Naive thymus-derived CD4-positive, alpha-beta T cell (primary cell): ENCODE measurements at regions of chr20 and their contacts with region 1.

Region 1: GRCh38 chr20:37095599-37096414 is at the start of gene RBL1:
- DNase-seq: peak; percentile 72 to 93 (median 91)
- ATAC-seq: peak; percentile 91
- H3K4me3 ChIP-seq: peak within 1 kb of the TSS; percentile 93
- H3K4me3 Mint-ChIP-seq: peak within 1 kb of the TSS; percentile 88 to 100 (median 98)
- H3K27ac ChIP-seq: peak within 1 kb of the TSS; percentile 91
- H3K27ac Mint-ChIP-seq: peak within 1 kb of the TSS; percentile 96 to 100 (median 100)
- H3K4me1 ChIP-seq: peaks cover 17 to 18% of the 10 kb centered on the region in 2 donors
- H3K4me1 Mint-ChIP-seq: peaks cover 15 to 42% (median 34%) of the 10 kb centered on the region in 7 donors
- H3K27me3 ChIP-seq: no peaks in the 10 kb centered on the region
- H3K27me3 Mint-ChIP-seq: peaks cover 0 to 6% (median 0%) of the 10 kb centered on the region in 5 donors
- total RNA-seq, gene RBL1: 27.4 to 51.2 (median 30.6) TPM

Region 2: DNA sequence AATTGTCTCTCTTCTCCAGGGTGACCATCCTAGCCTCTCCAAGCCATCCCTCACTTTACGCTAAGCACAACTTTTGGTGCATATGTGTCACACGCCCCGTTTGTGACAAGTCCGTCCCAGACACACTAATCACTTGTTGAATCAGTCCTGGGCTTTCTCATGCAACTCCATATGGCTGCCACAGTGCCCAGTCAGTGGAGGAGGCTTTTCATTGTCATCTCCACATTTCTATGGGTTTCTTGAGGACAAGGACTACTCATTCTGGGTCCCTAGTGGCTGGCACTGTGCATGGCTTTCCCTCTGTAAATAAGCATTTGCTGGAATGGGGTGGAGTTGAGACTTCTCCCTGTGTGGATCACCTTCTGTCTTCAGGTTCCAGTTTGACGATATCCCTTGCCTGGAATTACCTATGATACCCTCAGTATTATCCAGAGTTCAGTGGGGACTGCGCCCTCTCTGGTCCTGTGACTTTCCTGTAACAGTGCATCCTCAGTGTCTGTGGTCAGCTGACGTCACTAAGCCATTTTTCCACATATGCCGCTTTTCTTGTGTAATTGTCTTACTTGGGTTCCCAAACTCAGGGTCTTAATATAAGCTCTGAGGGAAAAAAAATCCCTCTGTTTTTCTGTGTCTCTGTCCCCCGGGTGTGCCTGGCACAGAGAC is 614.3 kb before region 1 on chr20:
- CTCF ChIA-PET with region 1: no interaction called
- POLR2A ChIA-PET with region 1: no interaction called
- intact Hi-C with region 1: no loop called
- DNase-seq: no peak
- ATAC-seq: peak; percentile 22
- H3K4me3 ChIP-seq: no peak overlapping the region
- H3K4me3 Mint-ChIP-seq: peak overlapping the region in 1 of 10 donors; percentile 37
- H3K27ac ChIP-seq: no peak overlapping the region
- H3K27ac Mint-ChIP-seq: peak overlapping the region in 1 of 9 donors; percentile 9
- H3K4me1 ChIP-seq: peaks cover 4% of the 10 kb centered on the region in 2 donors
- H3K4me1 Mint-ChIP-seq: peaks cover 16 to 56% (median 44%) of the 10 kb centered on the region in 7 donors
- H3K27me3 ChIP-seq: no peaks in the 10 kb centered on the region
- H3K27me3 Mint-ChIP-seq: no peaks in the 10 kb centered on the region

Region 3: DNA sequence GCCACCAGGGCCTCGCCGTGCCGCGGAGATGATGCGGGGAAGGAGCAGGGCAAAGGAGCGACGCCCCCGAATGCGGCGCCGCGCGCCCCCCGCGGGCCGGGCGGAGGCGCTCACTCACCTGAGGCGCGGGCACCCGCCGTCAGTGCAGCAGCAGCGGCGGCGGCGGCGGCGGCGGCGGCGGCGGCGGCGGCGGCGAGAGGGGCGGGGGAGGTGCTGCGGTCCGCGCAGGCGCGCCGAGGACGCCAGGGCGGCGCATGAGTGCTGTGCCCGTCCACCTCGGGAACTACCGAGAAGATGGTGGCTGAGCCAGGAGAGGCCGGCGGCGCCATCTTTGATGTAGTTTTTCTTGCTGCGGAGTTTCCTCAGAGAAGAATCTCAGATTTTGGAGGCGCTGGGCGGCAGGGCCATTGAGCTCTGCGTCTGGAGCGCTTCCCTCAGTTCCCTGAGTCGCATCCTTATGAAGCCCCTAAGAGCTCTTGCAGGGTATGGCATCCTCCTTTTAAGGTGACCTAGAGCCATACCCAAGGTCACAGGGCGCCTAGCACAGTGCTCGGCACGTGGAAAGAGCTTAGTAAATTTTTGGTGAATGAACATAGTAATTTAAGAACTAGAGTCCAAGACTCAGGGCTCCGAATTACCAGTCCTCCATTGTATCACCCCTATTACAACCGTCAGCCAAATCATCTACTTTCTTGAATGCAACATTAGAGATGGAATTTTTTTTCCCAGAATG is 349.7 kb before region 1 on chr20 and contains the start of gene NDRG3:
- CTCF ChIA-PET with region 1: no interaction called
- POLR2A ChIA-PET with region 1: no interaction called
- intact Hi-C with region 1: loop called in 1 of 2 experiments (anchors 1 kb)
- DNase-seq: peak; percentile 81 to 93 (median 91)
- ATAC-seq: peak; percentile 100
- H3K4me3 ChIP-seq: peak within 1 kb of the TSS; percentile 93
- H3K4me3 Mint-ChIP-seq: peak within 1 kb of the TSS; percentile 85 to 94 (median 90)
- H3K27ac ChIP-seq: peak within 1 kb of the TSS; percentile 70
- H3K27ac Mint-ChIP-seq: peak within 1 kb of the TSS; percentile 83 to 97 (median 88)
- H3K4me1 ChIP-seq: peaks cover 5 to 7% of the 10 kb centered on the region in 2 donors
- H3K4me1 Mint-ChIP-seq: peaks cover 20 to 41% (median 29%) of the 10 kb centered on the region in 7 donors
- H3K27me3 ChIP-seq: no peaks in the 10 kb centered on the region
- H3K27me3 Mint-ChIP-seq: no peaks in the 10 kb centered on the region
- total RNA-seq, gene NDRG3: 20.8 to 30.6 (median 28.9) TPM

Region 4: DNA sequence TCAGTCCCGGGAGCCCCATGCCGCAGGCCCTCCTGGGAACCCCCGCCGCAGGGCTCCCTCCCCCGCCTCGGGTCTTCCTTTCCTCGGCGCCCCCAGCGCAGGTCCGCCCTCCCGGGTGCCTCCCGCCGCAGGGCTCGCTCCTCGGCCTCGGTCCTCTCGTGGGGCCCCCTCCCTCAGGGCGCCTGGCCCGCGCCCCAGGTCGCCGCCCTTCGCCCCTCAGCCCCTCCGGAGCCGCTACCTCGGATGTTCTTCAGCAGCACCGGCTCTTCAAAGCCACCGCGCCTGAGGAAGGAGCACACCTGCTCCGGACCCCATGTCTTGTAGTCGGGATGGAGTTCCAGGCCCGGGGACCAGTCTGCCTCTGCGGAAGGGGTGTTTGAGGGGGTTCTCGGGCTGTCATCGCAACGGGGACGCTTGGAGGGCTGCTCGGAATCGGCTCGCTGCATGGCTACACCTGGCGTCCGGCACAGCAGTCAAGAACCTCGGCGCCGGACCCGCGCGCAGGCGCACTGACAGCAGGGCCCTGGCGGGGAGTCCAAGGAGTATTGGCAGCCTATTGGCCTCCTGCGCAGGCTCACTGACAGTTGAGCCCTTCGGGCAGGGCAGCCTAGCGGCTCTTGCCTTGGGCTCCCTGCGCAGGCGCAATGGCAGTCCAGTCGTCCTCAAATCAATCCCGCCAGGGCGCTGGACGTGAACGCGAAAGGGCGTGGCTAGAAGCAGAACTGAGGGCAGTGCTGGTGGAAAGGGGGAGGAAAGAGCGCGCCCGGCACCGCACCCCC is 144.4 kb before region 1 on chr20 and contains the start of gene SAMHD1:
- CTCF ChIA-PET with region 1: no interaction called
- POLR2A ChIA-PET with region 1: interaction called, 3 read pairs
- intact Hi-C with region 1: loop called (anchors 1 kb)
- DNase-seq: peak; percentile 72 to 93 (median 81)
- ATAC-seq: peak; percentile 86
- H3K4me3 ChIP-seq: peak within 1 kb of the TSS; percentile 94
- H3K4me3 Mint-ChIP-seq: peak within 1 kb of the TSS; percentile 93 to 99 (median 98)
- H3K27ac ChIP-seq: peak within 1 kb of the TSS; percentile 97
- H3K27ac Mint-ChIP-seq: peak within 1 kb of the TSS; percentile 96 to 99 (median 98)
- H3K4me1 ChIP-seq: peaks cover 40 to 45% of the 10 kb centered on the region in 2 donors
- H3K4me1 Mint-ChIP-seq: peaks cover 28 to 50% (median 37%) of the 10 kb centered on the region in 7 donors
- H3K27me3 ChIP-seq: no peaks in the 10 kb centered on the region
- H3K27me3 Mint-ChIP-seq: no peaks in the 10 kb centered on the region
- total RNA-seq, gene SAMHD1: 271 to 393 (median 338) TPM

Region 5: GRCh38 chr20:37081717-37082289 is 14.0 kb before region 1 on chr20:
- CTCF ChIA-PET with region 1: interaction called, 7 read pairs
- POLR2A ChIA-PET with region 1: interaction called, 10 read pairs
- intact Hi-C with region 1: no loop called
- DNase-seq: peak in 7 of 9 donors; percentile 21 to 64 (median 54)
- ATAC-seq: peak; percentile 61
- H3K4me3 ChIP-seq: no peak overlapping the region
- H3K4me3 Mint-ChIP-seq: peak overlapping the region in 3 of 10 donors; percentile 5 to 42 (median 17)
- H3K27ac ChIP-seq: no peak overlapping the region
- H3K27ac Mint-ChIP-seq: peak overlapping the region; percentile 62 to 89 (median 82)
- H3K4me1 ChIP-seq: peaks cover 12% of the 10 kb centered on the region in 2 donors
- H3K4me1 Mint-ChIP-seq: peaks cover 2 to 37% (median 29%) of the 10 kb centered on the region in 7 donors
- H3K27me3 ChIP-seq: no peaks in the 10 kb centered on the region
- H3K27me3 Mint-ChIP-seq: no peaks in the 10 kb centered on the region

Region 6: GRCh38 chr20:37223053-37223452 is 127.2 kb after region 1 on chr20:
- CTCF ChIA-PET with region 1: no interaction called
- POLR2A ChIA-PET with region 1: no interaction called
- intact Hi-C with region 1: no loop called
- DNase-seq: no peak
- ATAC-seq: peak; percentile 98
- H3K4me3 ChIP-seq: no peak overlapping the region
- H3K4me3 Mint-ChIP-seq: no peak overlapping the region
- H3K27ac ChIP-seq: no peak overlapping the region
- H3K27ac Mint-ChIP-seq: no peak overlapping the region
- H3K4me1 ChIP-seq: no peaks in the 10 kb centered on the region
- H3K4me1 Mint-ChIP-seq: peaks cover 0 to 10% (median 5%) of the 10 kb centered on the region in 7 donors
- H3K27me3 ChIP-seq: no peaks in the 10 kb centered on the region
- H3K27me3 Mint-ChIP-seq: no peaks in the 10 kb centered on the region

Region 7: DNA sequence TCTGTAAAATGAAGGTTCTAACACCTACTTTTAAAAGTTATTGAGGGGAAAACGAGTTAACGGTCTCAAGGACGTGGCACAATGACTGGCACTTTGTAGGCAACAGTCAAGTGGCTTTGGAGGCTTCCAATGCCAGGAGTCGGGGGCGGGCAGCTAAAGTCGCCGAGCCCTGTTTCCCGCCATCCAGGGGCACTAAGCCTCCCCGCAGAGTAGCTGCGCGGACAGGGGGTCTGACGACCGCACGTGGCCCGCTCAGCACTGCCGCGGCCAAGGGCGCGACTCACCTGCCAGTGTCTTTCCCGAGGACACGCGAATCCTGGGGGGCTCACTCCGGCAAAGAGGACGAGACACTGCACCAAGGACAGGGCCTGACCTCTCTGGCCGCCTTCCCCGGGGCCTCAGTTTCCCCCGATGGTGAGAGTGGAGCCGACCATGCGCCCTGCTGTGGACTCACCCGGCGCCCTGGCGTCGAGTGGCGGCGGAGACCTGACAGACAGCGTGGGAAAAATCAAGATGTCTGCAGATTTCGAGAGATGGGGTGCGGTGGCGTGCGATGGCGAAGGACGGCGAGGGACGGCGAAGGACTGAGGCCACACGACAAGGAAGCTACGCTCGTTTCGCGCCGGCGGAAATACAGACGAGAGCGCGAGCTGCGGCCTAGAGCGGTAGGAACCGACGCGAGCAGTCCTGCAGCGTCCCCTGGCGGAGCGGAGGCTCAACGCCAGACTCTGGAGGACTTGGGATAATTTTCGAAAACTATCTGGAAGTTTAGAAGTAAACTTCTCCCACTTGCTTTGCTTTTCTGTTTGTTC is 1339.1 kb after region 1 on chr20 and contains the start of gene SNHG17:
- CTCF ChIA-PET with region 1: no interaction called
- POLR2A ChIA-PET with region 1: no interaction called
- intact Hi-C with region 1: loop called in 1 of 2 experiments (anchors 5 kb)
- DNase-seq: peak; percentile 80 to 89 (median 87)
- ATAC-seq: peak; percentile 99
- H3K4me3 ChIP-seq: peak within 1 kb of the TSS; percentile 62
- H3K4me3 Mint-ChIP-seq: peak within 1 kb of the TSS; percentile 87 to 99 (median 94)
- H3K27ac ChIP-seq: peak within 1 kb of the TSS; percentile 81
- H3K27ac Mint-ChIP-seq: peak within 1 kb of the TSS; percentile 91 to 98 (median 95)
- H3K4me1 ChIP-seq: peaks cover 6 to 8% of the 10 kb centered on the region in 2 donors
- H3K4me1 Mint-ChIP-seq: peaks cover 20 to 41% (median 35%) of the 10 kb centered on the region in 7 donors
- H3K27me3 ChIP-seq: no peaks in the 10 kb centered on the region
- H3K27me3 Mint-ChIP-seq: peaks cover 0 to 9% (median 5%) of the 10 kb centered on the region in 5 donors
- total RNA-seq, gene SNHG17: 43.9 to 102 (median 52.4) TPM